ENCODE measurements at regions of chr13 and their contacts with region 1.

Region 1: DNA sequence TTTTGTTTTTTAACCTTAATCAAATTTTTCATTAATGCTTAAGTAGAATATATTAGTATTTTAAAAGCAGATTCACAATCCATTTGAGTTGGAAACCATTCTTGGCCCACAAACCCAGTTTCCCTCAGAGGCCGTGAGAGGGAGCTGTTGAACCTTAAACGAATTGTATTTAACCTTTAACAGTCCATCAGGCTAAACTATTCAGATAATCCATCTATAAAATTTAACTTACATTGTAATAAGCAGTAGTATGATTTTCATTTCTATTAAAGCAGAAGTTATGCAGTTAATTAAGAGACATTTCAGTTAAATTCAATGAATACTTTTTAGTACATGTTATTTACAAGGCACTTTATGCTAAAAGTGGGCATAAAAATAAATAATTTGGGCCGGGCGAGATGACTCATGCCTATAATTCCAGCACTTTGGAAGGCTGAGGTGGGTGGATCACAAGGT is 123.1 kb upstream of the C1QTNF9B start:
- DNase-seq: peak; percentile 35 to 45
- H3K4me3 ChIP-seq: no peak overlapping the region
- H3K27ac ChIP-seq: no peak overlapping the region
- H3K4me1 ChIP-seq: no peaks in the 10 kb centered on the region
- H3K27me3 ChIP-seq: no peaks in the 10 kb centered on the region
- CTCF ChIP-seq: peak; percentile 84

Region 2: GRCh38 chr13:24053519-24054251 is 33.3 kb after region 1 on chr13:
- CTCF ChIA-PET with region 1: no interaction called
- POLR2A ChIA-PET with region 1: no interaction called
- intact Hi-C with region 1: loop called (anchors 5 kb)
- DNase-seq: peak; percentile 55 to 78
- H3K4me3 ChIP-seq: no peak overlapping the region
- H3K27ac ChIP-seq: no peak overlapping the region
- H3K4me1 ChIP-seq: peaks cover 14% of the 10 kb centered on the region
- H3K27me3 ChIP-seq: no peaks in the 10 kb centered on the region
- CTCF ChIP-seq: peak; percentile 89

Region 3: DNA sequence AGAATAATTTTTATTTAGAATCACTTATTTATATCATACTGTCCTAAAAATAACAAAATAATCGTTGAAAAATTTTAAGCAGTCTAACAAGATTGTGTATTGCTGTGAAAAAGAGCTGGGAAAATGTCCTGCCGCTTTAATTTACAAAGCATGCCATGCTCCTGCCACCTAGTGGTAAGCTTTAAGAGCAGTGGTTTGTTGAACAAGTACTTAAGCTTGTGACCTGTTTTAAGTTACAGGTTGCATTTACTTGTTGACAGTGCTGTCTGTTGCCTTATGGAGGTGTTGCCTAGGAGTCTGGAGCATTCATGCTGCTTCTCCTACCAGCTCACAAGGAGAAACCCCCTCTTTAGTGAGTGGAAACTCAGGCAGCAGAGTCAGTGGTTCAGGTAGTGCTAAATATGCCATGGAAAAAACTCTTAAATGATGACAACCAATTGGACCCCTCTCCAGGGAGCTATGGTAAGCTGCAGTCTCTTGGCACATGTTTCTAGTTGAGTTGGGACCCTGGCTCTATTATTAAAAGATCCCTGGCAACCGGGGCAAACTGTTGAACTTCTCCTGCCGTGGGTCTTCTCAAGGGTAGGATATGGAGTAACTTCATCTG is 208.6 kb after region 1 on chr13:
- CTCF ChIA-PET with region 1: interaction called, 6 read pairs
- POLR2A ChIA-PET with region 1: interaction called, 4 read pairs
- intact Hi-C with region 1: loop called (anchors 2 kb)
- DNase-seq: peak; percentile 20 to 38
- H3K4me3 ChIP-seq: no peak overlapping the region
- H3K27ac ChIP-seq: no peak overlapping the region
- H3K4me1 ChIP-seq: no peaks in the 10 kb centered on the region
- H3K27me3 ChIP-seq: no peaks in the 10 kb centered on the region
- CTCF ChIP-seq: peak; percentile 90